ENCODE measurements at regions of chr20 and their contacts with region 1.

Region 1: DNA sequence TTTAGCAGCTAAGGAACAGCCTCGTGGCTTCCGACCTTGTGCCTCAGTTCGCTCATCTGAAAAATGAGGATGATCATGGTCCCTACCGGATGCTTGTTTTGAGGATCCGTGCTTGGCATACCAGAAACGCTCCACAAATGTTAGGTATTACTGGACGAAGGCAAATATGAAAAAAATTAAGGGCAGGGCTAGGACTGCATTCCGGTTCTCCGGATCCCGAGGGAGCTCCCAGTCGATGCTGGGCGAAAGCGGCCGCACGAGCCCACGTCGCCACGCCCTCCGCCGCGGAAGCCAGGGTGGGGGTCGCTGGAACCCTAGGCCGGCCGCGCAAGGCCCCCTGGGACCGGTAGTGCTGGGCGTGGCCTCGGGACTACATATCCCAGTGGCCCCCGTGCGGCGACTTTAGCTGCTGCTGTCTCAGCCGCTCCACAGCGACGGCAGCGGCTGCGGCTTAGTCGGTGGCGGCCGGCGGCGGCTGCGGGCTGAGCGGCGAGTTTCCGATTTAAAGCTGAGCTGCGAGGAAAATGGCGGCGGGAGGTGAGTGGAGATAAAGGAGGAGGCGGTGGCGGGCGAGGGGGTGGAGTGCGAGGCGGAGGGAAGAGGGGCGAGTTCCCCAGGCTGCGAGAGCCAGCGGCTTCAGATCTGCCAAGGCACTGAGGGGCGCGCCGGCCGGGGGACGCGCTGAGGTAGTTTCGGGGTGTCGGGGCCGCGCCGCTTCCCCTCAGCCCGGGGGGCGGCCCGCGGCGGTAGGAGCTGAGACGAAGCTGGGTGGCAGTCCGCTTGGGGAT is at the start of gene NCOA3:
- DNase-seq: peak; percentile 91
- H3K4me3 Mint-ChIP-seq: peak within 1 kb of the TSS; percentile 100
- H3K27ac Mint-ChIP-seq: peak within 1 kb of the TSS; percentile 99
- H3K4me1 Mint-ChIP-seq: peaks cover 49% of the 10 kb centered on the region
- H3K27me3 Mint-ChIP-seq: no peaks in the 10 kb centered on the region
- total RNA-seq, gene NCOA3: 119 and 126 TPM in 2 replicates

Region 2: GRCh38 chr20:47356526-47357295 is 145.0 kb before region 1 on chr20 and contains the start of gene ZMYND8:
- intact Hi-C with region 1: loop called (anchors 5 kb)
- DNase-seq: peak; percentile 97
- H3K4me3 Mint-ChIP-seq: peak within 1 kb of the TSS; percentile 86
- H3K27ac Mint-ChIP-seq: peak within 1 kb of the TSS; percentile 100
- H3K4me1 Mint-ChIP-seq: peaks cover 51% of the 10 kb centered on the region
- H3K27me3 Mint-ChIP-seq: no peaks in the 10 kb centered on the region
- total RNA-seq, gene ZMYND8: 45.7 and 46.7 TPM in 2 replicates

Region 3: GRCh38 chr20:47487175-47487917 is 14.3 kb before region 1 on chr20:
- intact Hi-C with region 1: loop called (anchors 1 kb)
- DNase-seq: peak; percentile 69
- H3K4me3 Mint-ChIP-seq: peak overlapping the region; percentile 60
- H3K27ac Mint-ChIP-seq: peak overlapping the region; percentile 99
- H3K4me1 Mint-ChIP-seq: peaks cover 53% of the 10 kb centered on the region
- H3K27me3 Mint-ChIP-seq: no peaks in the 10 kb centered on the region

Region 4: GRCh38 chr20:47561180-47561579 is 59.5 kb after region 1 on chr20:
- intact Hi-C with region 1: loop called (anchors 5 kb)
- DNase-seq: no peak
- H3K4me3 Mint-ChIP-seq: no peak overlapping the region
- H3K27ac Mint-ChIP-seq: no peak overlapping the region
- H3K4me1 Mint-ChIP-seq: peaks cover 61% of the 10 kb centered on the region
- H3K27me3 Mint-ChIP-seq: no peaks in the 10 kb centered on the region

Measured in activated T-helper 2 cell treated with anti-CD3 and anti-CD28 coated beads, Interferon-gamma antibody, Interleukin-2, Interleukin-4, amounts not matched to agents 10 μg/mL and 5 μg/mL and 100 μg/mL, durations not matched to agents 14 hours and 24 hours and 36 hours (primary cell).